GM18951 (cell line): ENCODE measurements at regions of chr1 and their contacts with region 1.

Region 1: GRCh38 chr1:197180252-197180878 is 33.9 kb upstream of the ASPM start:
- POLR2A ChIP-seq: no peak

Region 2: DNA sequence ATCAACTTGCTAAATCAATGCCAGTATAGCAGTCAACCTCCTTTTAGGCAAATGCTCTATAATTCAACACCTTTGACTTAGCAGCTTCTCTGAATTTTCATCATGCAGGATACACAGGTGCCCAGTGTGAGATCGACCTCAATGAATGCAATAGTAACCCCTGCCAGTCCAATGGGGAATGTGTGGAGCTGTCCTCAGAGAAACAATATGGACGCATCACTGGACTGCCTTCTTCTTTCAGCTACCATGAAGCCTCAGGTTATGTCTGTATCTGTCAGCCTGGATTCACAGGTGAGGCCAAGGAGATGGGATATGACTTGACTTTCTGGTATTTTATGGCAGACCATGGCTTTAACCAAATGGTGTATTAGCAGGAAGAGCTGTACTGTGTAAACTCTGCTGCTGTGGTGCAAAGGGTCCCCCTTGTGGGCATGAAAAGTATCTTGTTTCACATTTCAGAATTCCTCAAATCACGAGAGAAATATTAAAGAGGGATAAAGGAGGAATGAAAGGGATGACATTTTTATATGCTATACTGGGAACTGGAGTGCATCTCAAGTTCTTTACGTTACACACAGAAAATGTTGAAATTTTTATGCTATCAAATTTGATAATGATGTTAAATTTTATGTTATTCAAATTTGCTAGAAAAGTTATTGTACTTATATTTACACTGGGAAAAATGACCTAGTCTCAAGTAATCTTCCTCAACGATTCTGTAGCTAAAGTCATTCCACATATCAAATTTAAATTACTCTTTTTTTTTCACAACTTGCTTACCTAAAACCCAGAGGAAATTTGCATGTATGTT is 176.6 kb after region 1 on chr1:
- in situ Hi-C with region 1: loop called (anchors 25 kb)
- POLR2A ChIP-seq: no peak